ENCODE measurements at regions of chr1 and their contacts with region 1.

Region 1: DNA sequence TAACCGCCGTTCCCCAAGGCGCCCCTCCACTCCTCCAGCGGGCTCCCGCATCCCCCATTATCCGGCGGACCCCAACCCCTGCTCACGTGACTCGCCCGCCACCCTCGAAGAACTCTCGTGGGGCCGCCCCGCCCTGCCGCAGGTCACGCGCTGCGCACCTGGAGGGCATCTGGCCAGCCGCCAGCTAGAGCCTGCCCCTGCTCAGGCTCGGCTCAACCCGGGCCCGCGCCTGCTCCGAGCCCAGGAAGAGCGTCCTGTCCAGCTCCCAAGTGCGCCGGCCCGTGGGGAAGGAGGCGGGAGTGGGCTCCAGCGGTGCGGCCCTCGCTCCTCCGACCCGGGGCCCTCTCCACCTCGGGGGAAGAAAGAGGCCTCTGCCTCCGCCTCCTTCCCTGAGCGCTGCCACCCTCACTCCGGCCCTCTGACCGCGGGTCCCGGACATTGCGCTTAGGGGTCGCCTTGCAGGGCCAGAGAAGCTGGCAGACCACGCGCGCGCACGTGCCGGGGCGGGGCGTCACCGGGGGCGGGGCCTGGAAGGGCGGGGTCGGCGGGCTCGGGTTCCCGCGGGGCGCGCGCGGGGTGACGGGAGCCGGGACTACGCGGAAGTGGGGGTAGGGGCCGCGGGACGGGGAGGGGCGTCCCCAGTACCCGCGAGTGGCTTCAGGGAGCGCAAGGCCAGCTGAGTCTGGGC is 28.4 kb downstream of the HMGN2 start:
- DNase-seq: peak; percentile 77 to 94 (median 88)
- ATAC-seq: peak; percentile 71
- H3K4me3 ChIP-seq: peak overlapping the region; percentile 76
- H3K4me3 Mint-ChIP-seq: peak overlapping the region; percentile 81
- H3K27ac ChIP-seq: peak overlapping the region; percentile 91 to 94
- H3K27ac Mint-ChIP-seq: peak overlapping the region; percentile 73
- H3K4me1 ChIP-seq: peaks cover 27% of the 10 kb centered on the region
- H3K4me1 Mint-ChIP-seq: peaks cover 14% of the 10 kb centered on the region
- H3K27me3 ChIP-seq: no peaks in the 10 kb centered on the region
- H3K27me3 Mint-ChIP-seq: no peaks in the 10 kb centered on the region
- CTCF ChIP-seq: peak; percentile 54

Region 2: DNA sequence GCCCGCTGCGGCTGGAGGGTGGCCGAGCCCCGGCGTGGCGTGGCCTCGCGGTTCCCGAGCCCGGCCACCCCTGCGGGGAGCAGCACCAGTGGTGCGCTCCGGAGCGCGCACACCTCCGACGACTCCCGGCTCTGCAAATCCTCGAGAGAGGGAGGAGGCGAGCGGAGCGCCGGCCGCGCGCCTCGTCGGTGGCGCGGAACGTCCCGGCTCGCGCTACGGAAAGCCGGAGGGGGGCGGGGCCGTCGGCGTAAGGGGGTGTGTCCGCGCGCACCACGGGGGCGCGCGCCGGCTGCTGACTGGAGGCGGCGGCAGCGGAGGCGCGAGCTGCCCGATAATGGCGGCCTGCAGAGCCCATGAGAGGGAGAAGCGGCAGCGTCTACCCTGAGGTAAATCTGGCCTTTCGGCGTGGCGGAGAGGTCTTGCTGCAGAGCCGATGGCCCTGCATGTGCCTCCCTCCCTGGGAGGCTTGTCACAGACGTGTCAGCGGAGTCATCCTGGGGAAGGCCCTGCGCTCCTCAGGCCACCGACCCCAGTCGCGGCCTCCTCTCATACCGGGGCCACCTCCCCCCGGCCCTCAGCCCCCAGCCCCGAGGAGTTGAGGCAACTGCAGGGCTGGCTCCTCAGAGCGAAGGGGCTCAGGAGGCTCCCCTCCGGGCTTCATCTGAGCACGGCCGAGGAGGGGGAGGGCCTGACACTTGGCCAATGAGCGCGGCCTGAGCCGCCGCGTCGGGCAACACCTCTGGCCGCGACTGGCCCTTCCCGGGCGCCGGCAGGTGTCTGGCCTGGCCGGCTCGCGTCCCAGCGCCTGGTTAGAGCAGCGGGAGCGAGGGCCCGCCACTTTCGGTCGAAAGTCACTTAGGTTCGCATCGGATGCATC is 388.9 kb before region 1 on chr1 and contains the start of gene PDIK1L:
- CTCF ChIA-PET with region 1: no interaction called
- POLR2A ChIA-PET with region 1: no interaction called
- intact Hi-C with region 1: loop called in 1 of 2 experiments (anchors 5 kb)
- DNase-seq: peak; percentile 91 to 99 (median 95)
- ATAC-seq: peak; percentile 86
- H3K4me3 ChIP-seq: peak within 1 kb of the TSS; percentile 99
- H3K4me3 Mint-ChIP-seq: peak within 1 kb of the TSS; percentile 96
- H3K27ac ChIP-seq: peak within 1 kb of the TSS; percentile 34 to 73
- H3K27ac Mint-ChIP-seq: peak within 1 kb of the TSS; percentile 92
- H3K4me1 ChIP-seq: peaks cover 24% of the 10 kb centered on the region
- H3K4me1 Mint-ChIP-seq: peaks cover 38% of the 10 kb centered on the region
- H3K27me3 ChIP-seq: no peaks in the 10 kb centered on the region
- H3K27me3 Mint-ChIP-seq: no peaks in the 10 kb centered on the region
- CTCF ChIP-seq: no peak
- total RNA-seq, gene PDIK1L: 9.5 to 9.9 TPM

Region 3: GRCh38 chr1:26408604-26409003 is 92.0 kb before region 1 on chr1:
- CTCF ChIA-PET with region 1: no interaction called
- POLR2A ChIA-PET with region 1: no interaction called
- intact Hi-C with region 1: no loop called
- DNase-seq: peak; percentile 65 to 89 (median 77)
- ATAC-seq: peak; percentile 96
- H3K4me3 ChIP-seq: no peak overlapping the region
- H3K4me3 Mint-ChIP-seq: peak overlapping the region; percentile 12
- H3K27ac ChIP-seq: no peak overlapping the region
- H3K27ac Mint-ChIP-seq: no peak overlapping the region
- H3K4me1 ChIP-seq: peaks cover 31% of the 10 kb centered on the region
- H3K4me1 Mint-ChIP-seq: peaks cover 30% of the 10 kb centered on the region
- H3K27me3 ChIP-seq: peaks cover 47 to 58% of the 10 kb centered on the region in 2 experiments
- H3K27me3 Mint-ChIP-seq: peaks cover 65% of the 10 kb centered on the region
- CTCF ChIP-seq: no peak

Region 4: DNA sequence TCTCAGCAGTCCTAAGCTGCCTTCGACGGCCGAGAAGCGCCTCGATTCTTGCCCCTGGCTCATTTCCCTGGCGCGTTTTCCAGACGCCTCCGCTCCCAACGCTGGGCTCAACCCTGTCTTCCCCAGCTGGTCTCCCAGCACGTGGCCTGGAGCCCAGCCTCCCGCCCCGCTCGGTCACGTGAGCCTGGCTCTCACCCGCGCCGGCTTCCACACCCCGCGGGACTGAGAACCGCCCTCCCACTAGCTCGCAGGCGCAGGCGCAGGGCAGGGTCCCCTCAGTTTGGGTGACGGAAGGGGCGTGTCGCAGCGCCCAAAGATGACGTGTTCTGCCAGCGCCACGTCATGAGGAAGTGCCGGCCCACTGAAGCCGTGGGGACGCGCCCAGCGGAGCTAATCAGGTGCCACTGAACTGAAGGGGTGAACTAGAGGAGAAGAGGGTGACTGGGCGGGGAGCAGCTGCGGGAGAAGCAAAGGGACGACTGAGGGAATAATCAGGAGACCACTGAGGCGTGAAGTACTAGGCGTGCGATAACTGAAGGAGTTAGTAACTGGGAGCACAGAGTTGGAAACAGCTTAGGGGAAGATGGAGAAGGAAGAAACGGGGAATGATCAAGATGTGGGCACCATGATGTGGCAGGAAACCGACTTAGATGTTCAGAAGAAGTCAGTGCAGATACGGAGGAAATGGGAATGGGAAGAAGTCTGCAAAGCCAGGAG is 68.5 kb before region 1 on chr1 and contains the start of gene DHDDS:
- CTCF ChIA-PET with region 1: no interaction called
- POLR2A ChIA-PET with region 1: interaction called, 23 read pairs
- intact Hi-C with region 1: loop called in 1 of 2 experiments (anchors 2 kb)
- DNase-seq: peak; percentile 95 to 99 (median 98)
- ATAC-seq: peak; percentile 94
- H3K4me3 ChIP-seq: peak within 1 kb of the TSS; percentile 81
- H3K4me3 Mint-ChIP-seq: peak within 1 kb of the TSS; percentile 92
- H3K27ac ChIP-seq: peak within 1 kb of the TSS; percentile 36 to 77
- H3K27ac Mint-ChIP-seq: peak within 1 kb of the TSS; percentile 88
- H3K4me1 ChIP-seq: peaks cover 26% of the 10 kb centered on the region
- H3K4me1 Mint-ChIP-seq: peaks cover 23% of the 10 kb centered on the region
- H3K27me3 ChIP-seq: no peaks in the 10 kb centered on the region
- H3K27me3 Mint-ChIP-seq: no peaks in the 10 kb centered on the region
- CTCF ChIP-seq: no peak
- total RNA-seq, gene DHDDS: 26.3 to 26.8 TPM

Region 5: DNA sequence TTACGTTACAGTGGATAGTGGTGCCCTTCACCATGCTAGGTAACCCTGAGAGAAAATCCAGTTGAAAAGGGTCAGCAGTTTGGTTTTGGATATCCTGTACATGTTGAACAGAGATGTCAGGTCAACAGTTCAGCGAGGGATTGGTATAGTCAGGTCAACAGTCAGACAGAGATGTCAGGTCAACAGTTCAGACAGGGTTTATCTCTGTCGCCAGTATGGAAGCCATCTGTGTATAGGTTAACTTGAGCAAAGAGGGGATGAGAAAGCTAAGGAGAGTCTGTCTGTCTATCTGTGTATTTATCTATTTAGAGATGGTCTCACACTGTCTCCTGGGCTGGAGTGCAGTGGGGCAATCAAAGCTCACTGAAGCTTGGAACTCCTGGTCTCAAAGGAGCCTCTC is 50.8 kb before region 1 on chr1:
- CTCF ChIA-PET with region 1: no interaction called
- POLR2A ChIA-PET with region 1: no interaction called
- intact Hi-C with region 1: no loop called
- DNase-seq: no peak
- ATAC-seq: no peak
- H3K4me3 ChIP-seq: no peak overlapping the region
- H3K4me3 Mint-ChIP-seq: no peak overlapping the region
- H3K27ac ChIP-seq: no peak overlapping the region
- H3K27ac Mint-ChIP-seq: no peak overlapping the region
- H3K4me1 ChIP-seq: no peaks in the 10 kb centered on the region
- H3K4me1 Mint-ChIP-seq: no peaks in the 10 kb centered on the region
- H3K27me3 ChIP-seq: no peaks in the 10 kb centered on the region
- H3K27me3 Mint-ChIP-seq: no peaks in the 10 kb centered on the region
- CTCF ChIP-seq: no peak

Region 6: GRCh38 chr1:26472901-26473845 is 27.5 kb before region 1 on chr1:
- CTCF ChIA-PET with region 1: interaction called, 21 read pairs
- POLR2A ChIA-PET with region 1: interaction called, 56 read pairs
- intact Hi-C with region 1: loop called (anchors 2 kb)
- DNase-seq: peak; percentile 93 to 99 (median 96)
- ATAC-seq: peak; percentile 77
- H3K4me3 ChIP-seq: peak overlapping the region; percentile 78
- H3K4me3 Mint-ChIP-seq: peak overlapping the region; percentile 89
- H3K27ac ChIP-seq: peak overlapping the region; percentile 90 to 95
- H3K27ac Mint-ChIP-seq: peak overlapping the region; percentile 99
- H3K4me1 ChIP-seq: peaks cover 36% of the 10 kb centered on the region
- H3K4me1 Mint-ChIP-seq: peaks cover 53% of the 10 kb centered on the region
- H3K27me3 ChIP-seq: no peaks in the 10 kb centered on the region
- H3K27me3 Mint-ChIP-seq: no peaks in the 10 kb centered on the region
- CTCF ChIP-seq: no peak

Region 7: GRCh38 chr1:26529655-26530409 is 29.2 kb after region 1 on chr1 and contains the start of gene RPS6KA1:
- CTCF ChIA-PET with region 1: interaction called, 20 read pairs
- POLR2A ChIA-PET with region 1: interaction called, 11 read pairs
- intact Hi-C with region 1: loop called in 1 of 2 experiments (anchors 1 kb)
- DNase-seq: peak; percentile 27 to 83 (median 54)
- ATAC-seq: peak; percentile 93
- H3K4me3 ChIP-seq: peak within 1 kb of the TSS; percentile 72
- H3K4me3 Mint-ChIP-seq: peak within 1 kb of the TSS; percentile 95
- H3K27ac ChIP-seq: peak within 1 kb of the TSS in 1 of 2 donors; percentile 11
- H3K27ac Mint-ChIP-seq: peak within 1 kb of the TSS; percentile 50
- H3K4me1 ChIP-seq: peaks cover 42% of the 10 kb centered on the region
- H3K4me1 Mint-ChIP-seq: peaks cover 24% of the 10 kb centered on the region
- H3K27me3 ChIP-seq: no peaks in the 10 kb centered on the region
- H3K27me3 Mint-ChIP-seq: no peaks in the 10 kb centered on the region
- CTCF ChIP-seq: no peak
- total RNA-seq, gene RPS6KA1: 29.1 to 29.6 TPM

Region 8: GRCh38 chr1:26541816-26542711 is 41.4 kb after region 1 on chr1:
- CTCF ChIA-PET with region 1: interaction called, 13 read pairs
- POLR2A ChIA-PET with region 1: interaction called, 41 read pairs
- intact Hi-C with region 1: loop called (anchors 2 to 5 kb)
- DNase-seq: peak; percentile 46 to 91 (median 66)
- ATAC-seq: peak; percentile 70
- H3K4me3 ChIP-seq: peak overlapping the region; percentile 40
- H3K4me3 Mint-ChIP-seq: peak overlapping the region; percentile 82
- H3K27ac ChIP-seq: peak overlapping the region; percentile 80 to 83
- H3K27ac Mint-ChIP-seq: peak overlapping the region; percentile 77
- H3K4me1 ChIP-seq: peaks cover 100% of the 10 kb centered on the region
- H3K4me1 Mint-ChIP-seq: peaks cover 90% of the 10 kb centered on the region
- H3K27me3 ChIP-seq: no peaks in the 10 kb centered on the region
- H3K27me3 Mint-ChIP-seq: no peaks in the 10 kb centered on the region
- CTCF ChIP-seq: peak; percentile 74

Region 9: GRCh38 chr1:26602378-26602959 is 101.8 kb after region 1 on chr1:
- CTCF ChIA-PET with region 1: interaction called, 6 read pairs
- POLR2A ChIA-PET with region 1: interaction called, 6 read pairs
- intact Hi-C with region 1: loop called in 1 of 2 experiments (anchors 2 kb)
- DNase-seq: peak in 10 of 14 experiments; percentile 4 to 83 (median 30)
- ATAC-seq: peak; percentile 79
- H3K4me3 ChIP-seq: no peak overlapping the region
- H3K4me3 Mint-ChIP-seq: no peak overlapping the region
- H3K27ac ChIP-seq: no peak overlapping the region
- H3K27ac Mint-ChIP-seq: no peak overlapping the region
- H3K4me1 ChIP-seq: no peaks in the 10 kb centered on the region
- H3K4me1 Mint-ChIP-seq: peaks cover 14% of the 10 kb centered on the region
- H3K27me3 ChIP-seq: no peaks in the 10 kb centered on the region
- H3K27me3 Mint-ChIP-seq: no peaks in the 10 kb centered on the region
- CTCF ChIP-seq: peak; percentile 97